Breast epithelium (tissue), 4 donors: ENCODE measurements at regions of chr1 and their contacts with region 1.

Region 1: DNA sequence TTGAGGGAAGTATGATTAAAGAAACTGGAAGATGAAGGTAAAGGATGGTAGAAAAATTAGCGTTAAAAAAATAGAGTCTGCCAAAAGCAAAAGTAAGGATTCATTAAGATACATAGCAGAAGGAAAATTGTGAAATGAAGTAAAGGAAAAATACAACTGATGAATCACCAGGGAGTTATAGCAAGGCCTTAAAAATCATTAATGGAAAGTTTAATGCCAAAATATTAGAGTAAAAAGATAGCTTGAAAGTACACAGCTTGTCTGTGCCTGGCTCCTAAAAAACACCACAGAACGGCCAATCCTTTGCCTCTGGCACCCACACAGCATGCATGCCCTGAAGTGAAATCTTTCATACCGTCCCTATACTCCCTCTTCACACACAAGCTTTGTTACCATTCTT is 66.9 kb upstream of the APOBEC4 start:
- DNase-seq: no peak
- H3K4me3 ChIP-seq: no peak overlapping the region
- H3K27ac ChIP-seq: no peak overlapping the region
- H3K4me1 ChIP-seq: no peaks in the 10 kb centered on the region
- H3K27me3 ChIP-seq: no peaks in the 10 kb centered on the region
- CTCF ChIP-seq: no peak
- POLR2A ChIP-seq: no peak

Region 2: DNA sequence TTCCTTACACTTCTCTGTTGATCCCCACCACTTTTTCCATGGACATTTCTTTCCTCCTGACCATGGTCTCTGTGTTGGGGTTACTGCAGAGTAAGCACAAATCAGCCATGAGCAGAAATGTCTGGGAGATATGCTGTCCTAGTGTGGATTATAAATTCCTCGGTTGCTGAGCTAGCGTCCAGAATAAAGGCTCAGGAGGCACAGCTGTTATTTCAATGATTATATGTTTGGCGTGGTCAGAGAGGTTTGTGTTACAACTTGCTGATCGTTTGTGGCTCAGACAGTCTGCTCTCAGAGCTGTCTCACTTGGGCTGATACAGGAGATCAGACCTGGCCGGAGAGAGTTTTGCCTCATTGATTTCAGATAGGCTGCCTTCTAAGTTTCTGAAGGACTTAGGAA is 571.4 kb before region 1 on chr1:
- intact Hi-C with region 1: loop called (anchors 10 kb)
- DNase-seq: no peak
- H3K4me3 ChIP-seq: no peak overlapping the region
- H3K27ac ChIP-seq: peak overlapping the region; percentile 52 to 67
- H3K4me1 ChIP-seq: no peaks in the 10 kb centered on the region
- H3K27me3 ChIP-seq: no peaks in the 10 kb centered on the region
- CTCF ChIP-seq: no peak
- POLR2A ChIP-seq: no peak

Region 3: GRCh38 chr1:183777328-183777727 is 57.3 kb after region 1 on chr1:
- intact Hi-C with region 1: no loop called
- DNase-seq: no peak
- H3K4me3 ChIP-seq: no peak overlapping the region
- H3K27ac ChIP-seq: no peak overlapping the region
- H3K4me1 ChIP-seq: no peaks in the 10 kb centered on the region
- H3K27me3 ChIP-seq: no peaks in the 10 kb centered on the region
- CTCF ChIP-seq: no peak
- POLR2A ChIP-seq: no peak

Region 4: DNA sequence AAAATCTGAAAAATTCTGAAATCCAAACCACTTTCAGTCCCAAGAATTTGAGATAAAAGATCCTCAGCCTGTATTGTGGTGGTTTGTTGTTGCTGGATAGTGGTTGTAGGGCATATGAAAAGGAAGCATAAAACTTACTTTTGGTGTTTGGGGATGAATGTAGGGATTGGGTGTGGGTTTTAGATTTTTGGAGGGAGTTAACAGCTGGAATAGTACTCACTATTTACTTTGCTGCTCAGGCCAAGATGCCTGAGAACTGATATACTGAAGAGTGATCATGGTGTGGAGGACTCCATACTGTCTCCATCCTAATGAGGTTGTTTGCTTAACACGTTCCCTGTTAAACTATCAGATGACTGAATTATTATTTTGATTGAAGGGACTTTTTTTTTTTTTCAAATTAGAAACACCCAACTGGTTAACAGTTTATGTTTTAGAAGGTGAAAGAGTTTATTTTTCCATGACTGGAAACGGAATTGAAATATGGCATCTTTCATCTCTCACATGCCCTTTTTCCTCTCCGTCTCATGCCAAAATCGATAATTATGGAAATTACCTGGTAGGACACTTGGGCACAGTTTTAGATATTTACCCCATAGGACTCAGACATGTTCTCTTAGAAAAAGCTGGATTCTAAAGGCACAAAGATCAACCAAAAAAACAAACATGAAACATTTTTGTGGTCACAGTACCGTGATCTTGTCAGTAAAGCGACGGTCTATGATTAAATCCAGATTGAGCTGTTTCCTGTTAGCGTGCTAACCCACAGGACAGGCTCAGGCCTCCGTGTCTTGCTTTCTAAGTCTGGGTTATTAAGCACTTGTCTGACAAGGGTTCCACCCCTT is 122.1 kb after region 1 on chr1:
- intact Hi-C with region 1: no loop called
- DNase-seq: peak in 1 of 2 donors; percentile 33
- H3K4me3 ChIP-seq: peak overlapping the region in 2 of 3 donors; percentile 10 to 29
- H3K27ac ChIP-seq: peak overlapping the region; percentile 59 to 62
- H3K4me1 ChIP-seq: peaks cover 0 to 5% of the 10 kb centered on the region in 2 donors
- H3K27me3 ChIP-seq: no peaks in the 10 kb centered on the region
- CTCF ChIP-seq: no peak
- POLR2A ChIP-seq: no peak